ENCODE measurements at regions of chr1 and their contacts with region 1.

Region 1: DNA sequence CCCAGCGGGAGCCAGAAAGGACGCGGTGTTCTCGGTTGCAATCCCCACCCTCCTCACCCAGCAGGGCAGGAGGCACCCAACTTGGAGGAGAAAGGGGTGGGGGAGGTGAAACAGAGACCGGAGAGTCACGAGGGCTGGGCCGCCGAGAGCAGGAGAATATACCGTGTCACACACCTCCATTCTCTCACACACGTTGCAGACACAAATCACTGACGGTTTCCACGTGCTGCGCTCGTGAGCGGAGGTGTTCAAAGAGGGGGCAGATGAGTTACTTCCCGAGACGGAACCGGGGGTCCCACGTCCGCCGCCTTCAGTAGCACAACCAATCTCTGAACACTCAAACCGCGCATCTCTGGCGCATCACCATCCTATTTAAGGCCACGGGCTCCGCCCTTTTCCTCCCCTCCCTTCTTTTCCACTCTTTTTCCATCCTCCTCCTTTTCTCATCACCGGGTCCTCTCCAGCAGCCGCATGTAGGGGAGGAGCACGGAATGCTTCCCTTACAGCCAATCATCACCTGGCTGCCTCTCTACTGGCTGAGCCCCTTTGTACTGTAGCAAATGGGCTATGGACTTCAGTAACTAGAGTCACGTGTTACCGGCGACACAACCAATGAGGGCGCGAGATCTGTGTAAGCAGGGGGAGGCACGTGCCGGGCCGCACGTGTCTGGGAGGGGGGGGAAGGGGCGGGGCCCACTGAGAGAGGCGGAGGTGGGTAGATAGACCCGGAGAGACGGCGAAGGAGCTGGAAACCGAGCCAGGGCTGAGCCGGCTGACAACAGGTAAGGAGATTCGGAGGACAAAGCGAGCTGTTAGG is at the start of gene CIART:
- DNase-seq: peak; percentile 88

Region 2: GRCh38 chr1:150149271-150150132 is 132.5 kb before region 1 on chr1 and contains the start of gene PLEKHO1:
- CTCF ChIA-PET with region 1: no interaction called
- POLR2A ChIA-PET with region 1: no interaction called
- DNase-seq: peak; percentile 83

Region 3: DNA sequence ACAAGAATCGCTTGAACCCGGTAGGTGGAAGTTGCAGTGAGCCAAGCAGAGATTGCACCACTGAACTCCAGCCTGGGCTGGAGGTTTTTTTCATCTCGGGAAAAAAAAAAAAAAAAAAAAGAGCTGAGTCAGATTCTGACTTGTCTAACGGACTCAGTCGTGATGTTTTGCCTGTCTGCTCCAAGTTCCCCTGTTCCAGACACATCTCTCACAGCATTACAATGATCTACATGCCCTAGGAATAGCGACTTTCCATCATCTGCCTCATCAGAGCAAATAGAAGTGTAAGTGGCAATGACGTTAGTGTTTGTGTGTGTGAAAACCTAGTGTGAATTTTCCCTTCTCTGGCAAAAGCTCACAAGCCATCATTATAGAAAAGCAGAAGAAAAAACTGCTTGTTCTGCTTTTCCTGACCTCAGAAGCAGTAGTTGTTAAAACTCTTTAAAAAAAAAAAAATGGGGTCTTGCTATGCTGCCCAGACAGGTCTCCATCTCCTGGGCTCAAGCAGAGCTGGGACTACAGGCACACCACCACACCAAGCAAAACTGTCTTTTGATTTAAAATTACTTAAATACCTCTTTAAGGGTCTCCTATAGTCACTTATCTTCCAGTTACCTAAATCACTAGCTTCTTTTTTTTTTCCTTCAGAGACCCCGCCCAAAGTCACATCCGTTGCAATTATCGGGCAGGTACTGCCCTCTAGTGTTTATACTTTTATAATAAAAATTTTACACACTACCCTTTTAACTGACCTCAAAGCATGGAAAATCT is 95.1 kb before region 1 on chr1:
- CTCF ChIA-PET with region 1: no interaction called
- POLR2A ChIA-PET with region 1: no interaction called
- DNase-seq: peak; percentile 55

Region 4: GRCh38 chr1:150235852-150236613 is 46.0 kb before region 1 on chr1 and contains the start of gene ANP32E:
- CTCF ChIA-PET with region 1: no interaction called
- POLR2A ChIA-PET with region 1: no interaction called
- DNase-seq: peak; percentile 99

Region 5: GRCh38 chr1:150259758-150260669 is 22.0 kb before region 1 on chr1:
- CTCF ChIA-PET with region 1: interaction called, 38 read pairs
- POLR2A ChIA-PET with region 1: interaction called, 6 read pairs
- DNase-seq: peak; percentile 48

Region 6: DNA sequence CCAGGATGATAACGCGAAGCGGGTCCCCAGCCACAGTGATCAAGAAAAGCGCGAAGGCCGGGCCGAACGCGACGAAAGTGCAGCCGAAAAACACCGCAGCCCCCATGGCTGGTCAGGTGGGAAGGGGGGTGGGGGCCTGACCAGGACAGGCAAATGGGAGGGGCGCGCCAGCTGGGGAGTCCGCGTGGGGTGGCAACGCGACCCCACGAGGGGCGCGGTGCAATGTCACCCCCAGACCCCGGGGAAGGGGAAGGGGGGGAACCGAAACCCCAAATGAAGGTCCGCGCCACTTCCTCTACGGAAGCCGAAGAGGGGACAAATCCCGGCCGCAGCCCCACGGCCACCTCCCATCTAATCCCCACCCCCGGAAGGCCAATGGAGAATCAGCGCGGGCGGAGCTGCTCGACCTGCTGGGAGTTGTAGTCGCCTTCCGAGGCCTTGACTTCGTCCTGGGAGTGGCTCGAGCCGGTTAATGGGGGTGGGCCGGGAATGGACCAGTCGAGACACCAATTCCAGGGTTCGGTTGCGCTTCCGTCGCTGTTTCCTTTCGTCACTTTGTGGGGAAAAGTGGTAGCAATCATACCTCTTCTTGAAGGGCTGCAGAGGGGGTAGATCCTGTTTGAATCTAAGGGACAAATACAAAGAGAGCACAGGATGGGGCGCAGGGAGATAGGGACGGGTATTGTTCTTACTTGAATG is 13.2 kb before region 1 on chr1 and contains the start of gene APH1A:
- CTCF ChIA-PET with region 1: interaction called, 11 read pairs
- POLR2A ChIA-PET with region 1: interaction called, 20 read pairs
- DNase-seq: peak; percentile 99

Measured in HEK293T (cell line).